ENCODE measurements at regions of chr12 and their contacts with region 1.

Region 1: DNA sequence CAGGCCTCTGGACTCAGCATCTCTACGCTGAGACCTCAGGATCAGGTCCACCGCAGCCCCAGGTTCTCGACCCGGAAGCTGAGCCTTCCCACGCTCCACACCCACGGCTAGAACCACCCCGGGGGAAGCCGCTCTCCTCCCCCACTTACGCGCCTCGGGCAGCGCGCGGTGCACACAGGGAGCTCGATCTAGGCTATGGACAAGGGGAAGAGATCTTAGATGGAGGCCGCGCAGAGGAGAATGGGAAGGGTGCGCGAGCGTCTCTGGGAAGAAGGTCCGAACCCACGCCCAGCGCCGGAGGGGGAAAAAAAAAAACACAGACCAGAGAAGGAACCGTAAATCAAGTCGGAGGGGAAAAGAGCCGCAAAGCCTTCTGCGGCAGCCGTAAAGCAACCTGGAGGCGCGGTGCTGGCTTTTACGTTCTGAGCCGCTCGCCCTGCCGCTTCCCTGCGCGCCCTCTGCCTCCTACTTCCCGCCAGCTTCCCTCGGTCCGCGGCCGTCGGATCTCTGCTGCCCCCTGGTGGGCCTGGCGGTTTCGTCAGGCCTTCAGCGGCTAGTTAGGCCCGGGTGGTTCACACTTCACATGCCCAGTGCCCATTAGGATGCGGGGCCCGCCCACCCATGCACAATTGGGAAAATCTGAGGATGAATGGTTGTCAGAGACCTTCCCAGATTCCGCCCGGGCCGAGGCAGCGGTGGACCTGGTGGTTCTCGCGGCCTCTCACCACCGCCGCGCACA is at the start of gene RAD52:
- DNase-seq: peak; percentile 88 to 98
- H3K4me3 ChIP-seq: peak within 1 kb of the TSS; percentile 82 to 93
- H3K27ac ChIP-seq: peak within 1 kb of the TSS; percentile 92 to 94
- H3K4me1 ChIP-seq: peaks cover 5 to 6% of the 10 kb centered on the region in 2 donors
- H3K27me3 ChIP-seq: no peaks in the 10 kb centered on the region
- CTCF ChIP-seq: peak; percentile 97 to 98 (median 98)
- total RNA-seq, gene RAD52: 175 TPM

Region 2: DNA sequence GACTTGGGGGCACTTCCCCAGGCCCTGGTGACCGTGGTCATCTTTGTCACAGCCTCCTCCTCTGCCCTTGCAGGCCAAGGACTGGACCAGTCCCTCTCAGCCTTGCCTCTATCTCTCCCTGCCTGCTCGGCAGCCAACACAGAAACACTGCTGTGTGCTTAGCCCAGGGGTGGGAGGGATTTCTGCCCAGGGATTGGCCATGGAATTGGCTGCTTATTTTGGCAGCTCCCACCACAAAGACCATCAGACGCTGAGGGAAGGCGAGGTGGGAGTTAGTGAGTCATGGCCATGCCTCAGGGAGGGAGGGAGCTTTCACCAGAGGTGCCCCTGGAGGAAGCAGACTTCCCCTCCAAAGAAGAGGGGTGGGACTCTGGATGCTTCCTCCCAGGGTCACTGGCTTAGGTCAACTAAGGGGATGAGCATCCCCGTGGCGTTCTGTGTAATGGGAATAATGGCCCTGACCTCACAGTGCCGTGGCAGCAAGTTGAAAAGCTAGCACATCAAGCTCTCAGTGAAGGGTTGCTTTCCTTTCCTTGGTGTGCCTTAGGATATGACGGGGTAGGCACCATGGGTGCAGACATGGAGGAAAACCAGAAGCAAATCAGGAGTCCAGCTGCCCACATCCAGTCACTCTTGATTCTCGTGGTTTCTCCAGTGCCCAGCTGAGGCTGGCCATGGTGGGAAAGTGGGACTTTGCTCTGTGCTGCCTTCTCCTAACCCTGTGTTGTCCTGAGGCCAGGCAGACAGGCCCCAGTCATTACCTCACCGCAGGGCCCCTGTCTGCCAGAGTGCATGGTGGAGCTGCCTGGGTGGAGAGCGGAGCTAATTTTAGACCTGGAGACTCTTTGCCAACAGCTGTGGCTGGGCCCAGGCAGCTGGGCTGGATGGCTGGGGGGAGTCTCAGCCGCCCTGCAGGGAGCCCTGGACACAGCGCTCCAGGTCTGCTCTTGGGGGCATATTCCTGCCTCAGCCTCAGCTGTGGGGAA is 468.5 kb before region 1 on chr12:
- intact Hi-C with region 1: loop called (anchors 1 kb)
- DNase-seq: peak; percentile 73 to 95
- H3K4me3 ChIP-seq: peak overlapping the region in 1 of 2 donors; percentile 30
- H3K27ac ChIP-seq: peak overlapping the region; percentile 94 to 98
- H3K4me1 ChIP-seq: peaks cover 3 to 26% of the 10 kb centered on the region in 2 donors
- H3K27me3 ChIP-seq: no peaks in the 10 kb centered on the region
- CTCF ChIP-seq: peak in 1 of 3 experiments; percentile 5

Region 3: GRCh38 chr12:569803-570434 is 379.7 kb before region 1 on chr12:
- intact Hi-C with region 1: loop called (anchors 1 kb)
- DNase-seq: peak in 1 of 2 donors; percentile 95
- H3K4me3 ChIP-seq: peak overlapping the region; percentile 68 to 77
- H3K27ac ChIP-seq: peak overlapping the region; percentile 93 to 97
- H3K4me1 ChIP-seq: peaks cover 7 to 21% of the 10 kb centered on the region in 2 donors
- H3K27me3 ChIP-seq: no peaks in the 10 kb centered on the region
- CTCF ChIP-seq: peak; percentile 94 to 95 (median 94)

Region 4: GRCh38 chr12:810671-811415 is 138.8 kb before region 1 on chr12:
- intact Hi-C with region 1: loop called (anchors 1 kb)
- DNase-seq: no peak
- H3K4me3 ChIP-seq: no peak overlapping the region
- H3K27ac ChIP-seq: no peak overlapping the region
- H3K4me1 ChIP-seq: peaks cover 2 to 28% of the 10 kb centered on the region in 2 donors
- H3K27me3 ChIP-seq: no peaks in the 10 kb centered on the region
- CTCF ChIP-seq: no peak

Region 5: DNA sequence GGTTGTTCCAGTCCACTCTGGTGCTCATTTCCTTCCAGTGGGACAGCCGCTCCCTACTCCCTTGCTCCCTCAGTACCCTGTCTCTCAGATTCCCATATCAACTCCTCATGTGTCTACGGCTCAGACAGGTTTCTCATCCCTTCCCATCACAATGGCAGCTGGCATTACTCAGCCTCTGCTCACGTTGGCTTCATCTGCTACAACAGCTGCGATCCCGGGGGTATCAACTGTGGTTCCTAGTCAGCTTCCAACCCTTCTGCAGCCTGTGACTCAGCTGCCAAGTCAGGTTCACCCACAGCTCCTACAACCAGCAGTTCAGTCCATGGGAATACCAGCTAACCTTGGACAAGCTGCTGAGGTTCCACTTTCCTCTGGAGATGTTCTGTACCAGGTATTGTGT is 70.0 kb before region 1 on chr12:
- intact Hi-C with region 1: no loop called
- DNase-seq: no peak
- H3K4me3 ChIP-seq: no peak overlapping the region
- H3K27ac ChIP-seq: no peak overlapping the region
- H3K4me1 ChIP-seq: no peaks in the 10 kb centered on the region
- H3K27me3 ChIP-seq: no peaks in the 10 kb centered on the region
- CTCF ChIP-seq: no peak

Region 6: DNA sequence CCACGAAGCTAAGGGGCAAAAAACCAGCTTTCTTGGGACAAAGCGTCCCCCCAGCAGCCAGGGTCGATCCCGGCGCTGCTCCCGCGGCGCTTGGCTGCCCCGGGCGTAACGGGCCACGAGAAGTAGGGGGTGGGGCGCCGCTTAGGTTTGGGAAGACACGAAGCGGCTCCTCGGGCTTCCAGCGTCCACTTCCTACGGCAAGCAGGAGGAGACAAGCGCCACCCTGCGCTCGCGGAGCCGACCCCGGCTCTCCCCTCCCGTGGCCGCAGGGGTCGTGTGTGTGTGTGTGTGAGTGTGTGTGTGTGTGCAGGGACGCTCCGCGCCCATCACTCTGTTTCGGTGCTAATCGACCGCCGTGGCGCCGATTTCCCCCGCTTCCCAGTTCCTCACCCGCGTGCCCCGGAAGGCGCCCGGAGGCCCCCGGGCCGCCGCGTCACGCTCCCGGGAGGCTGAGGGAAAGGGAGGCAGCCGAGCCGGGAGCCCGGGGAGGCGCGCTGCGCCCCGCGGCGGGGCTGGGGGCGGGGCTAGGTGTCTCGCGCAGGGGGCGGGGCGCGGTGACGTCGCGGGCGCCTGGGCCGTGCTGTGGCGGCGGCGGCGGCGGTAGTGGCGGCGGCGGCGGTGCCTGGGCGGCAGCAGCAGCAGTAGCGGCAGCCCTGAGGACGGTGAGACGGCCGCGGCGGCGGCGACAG is 41.2 kb after region 1 on chr12 and contains the start of gene ERC1:
- intact Hi-C with region 1: loop called (anchors 1 kb)
- DNase-seq: peak; percentile 55 to 93
- H3K4me3 ChIP-seq: peak within 1 kb of the TSS; percentile 90 to 94
- H3K27ac ChIP-seq: peak within 1 kb of the TSS; percentile 98
- H3K4me1 ChIP-seq: peaks cover 0 to 18% of the 10 kb centered on the region in 2 donors
- H3K27me3 ChIP-seq: no peaks in the 10 kb centered on the region
- CTCF ChIP-seq: peak in 2 of 3 experiments; percentile 3 to 6
- total RNA-seq, gene ERC1: 41.4 TPM

Region 7: GRCh38 chr12:1093166-1093751 is 143.6 kb after region 1 on chr12:
- intact Hi-C with region 1: loop called (anchors 5 kb)
- DNase-seq: no peak
- H3K4me3 ChIP-seq: no peak overlapping the region
- H3K27ac ChIP-seq: no peak overlapping the region
- H3K4me1 ChIP-seq: peaks cover 0 to 3% of the 10 kb centered on the region in 2 donors
- H3K27me3 ChIP-seq: no peaks in the 10 kb centered on the region
- CTCF ChIP-seq: peak; percentile 51 to 82 (median 78)

Region 8: DNA sequence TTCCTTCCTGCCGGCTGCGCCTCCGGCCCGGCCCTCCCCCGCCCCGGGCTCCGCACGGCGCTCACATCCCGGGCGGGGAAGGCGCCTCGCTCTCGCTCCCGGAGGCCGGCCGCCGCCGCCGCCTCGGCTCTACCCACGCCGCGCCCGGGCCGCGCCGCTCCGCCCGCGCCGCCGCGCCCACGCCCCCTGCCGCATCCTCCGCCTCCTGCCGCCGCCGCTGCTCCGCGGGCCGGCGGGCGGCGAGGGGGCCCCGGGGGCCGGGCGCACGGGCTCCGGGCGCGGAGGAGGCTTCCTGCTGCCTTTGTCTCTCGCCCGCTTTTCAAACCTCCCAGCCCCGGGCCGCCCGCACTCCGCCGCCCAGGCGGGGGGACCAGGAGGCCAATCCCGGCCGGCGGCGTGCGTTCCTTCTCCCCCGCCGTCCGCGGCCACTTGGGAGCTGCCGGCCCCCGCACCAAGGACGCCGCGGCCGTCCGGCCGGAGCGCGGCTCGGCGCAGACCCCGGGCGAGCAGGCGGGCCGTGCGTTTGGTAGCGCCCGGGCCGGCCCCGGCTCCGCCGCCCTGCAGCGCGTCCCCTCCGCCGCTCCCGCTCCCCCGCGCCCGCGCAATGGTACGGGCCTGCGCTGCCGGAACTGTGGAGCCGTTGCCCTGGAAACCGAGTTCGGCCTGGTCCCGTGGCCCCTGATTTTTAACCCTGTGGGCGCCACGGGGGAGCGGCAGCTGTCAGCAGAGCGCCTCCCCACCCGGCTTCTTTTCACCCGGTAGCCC is 644.8 kb after region 1 on chr12 and contains the start of gene FBXL14:
- intact Hi-C with region 1: loop called (anchors 5 kb)
- DNase-seq: peak; percentile 45 to 92
- H3K4me3 ChIP-seq: peak within 1 kb of the TSS; percentile 92 to 95
- H3K27ac ChIP-seq: peak within 1 kb of the TSS; percentile 84 to 86
- H3K4me1 ChIP-seq: peaks cover 9 to 26% of the 10 kb centered on the region in 2 donors
- H3K27me3 ChIP-seq: no peaks in the 10 kb centered on the region
- CTCF ChIP-seq: peak in 1 of 3 experiments; percentile 40
- total RNA-seq, gene FBXL14: 14.7 TPM

Measured in ascending aorta (tissue), 2 donors.